ENCODE measurements at regions of chr17 and their contacts with region 1.

Region 1: DNA sequence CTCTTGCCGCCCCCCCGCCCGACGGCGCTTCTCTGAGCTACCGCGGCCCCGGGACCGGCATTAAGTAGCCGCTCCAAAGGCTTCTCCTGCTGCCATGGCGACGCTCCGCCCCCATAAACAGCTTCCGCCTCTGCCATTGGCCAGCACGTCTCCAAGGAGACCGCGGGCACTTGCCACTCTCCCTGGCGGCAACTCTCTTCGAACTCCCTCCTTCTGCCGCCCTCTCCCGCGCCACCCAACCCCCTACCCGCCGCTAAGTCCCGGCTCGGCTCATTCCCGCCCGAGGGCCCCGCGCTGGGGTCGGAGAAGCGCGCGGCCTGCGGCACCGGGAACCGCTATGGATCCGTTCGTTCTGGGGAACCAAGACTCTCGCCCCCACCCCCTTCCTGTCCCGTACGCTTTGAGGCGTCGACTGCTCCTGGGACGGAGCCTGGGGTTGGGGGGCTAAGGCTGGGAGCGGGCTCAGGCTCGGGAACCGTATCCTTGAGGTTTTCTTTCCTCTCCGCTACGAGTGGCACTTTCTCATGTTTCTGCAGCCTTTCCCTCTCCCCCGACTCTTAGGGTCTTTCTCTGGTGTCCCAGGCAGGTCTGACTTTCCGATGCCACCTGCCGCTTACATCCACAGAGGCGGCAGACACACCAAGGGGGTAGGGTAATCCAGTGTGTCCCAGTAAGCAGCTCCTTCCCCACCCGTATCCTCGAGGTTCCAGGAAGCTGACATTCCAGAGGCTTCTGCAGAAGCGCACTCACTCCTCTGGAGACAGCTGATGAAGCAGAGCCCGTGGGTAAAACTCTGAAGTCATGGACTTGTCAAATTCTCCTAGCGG is at the start of gene FOXJ1:
- DNase-seq: peak; percentile 95
- ATAC-seq: peak; percentile 55
- H3K4me3 Mint-ChIP-seq: peak within 1 kb of the TSS; percentile 82
- H3K27ac Mint-ChIP-seq: peak within 1 kb of the TSS; percentile 94
- H3K4me1 Mint-ChIP-seq: peaks cover 51% of the 10 kb centered on the region
- H3K27me3 Mint-ChIP-seq: peaks cover 5% of the 10 kb centered on the region
- total RNA-seq, gene FOXJ1: 5.4 to 5.8 TPM

Region 2: DNA sequence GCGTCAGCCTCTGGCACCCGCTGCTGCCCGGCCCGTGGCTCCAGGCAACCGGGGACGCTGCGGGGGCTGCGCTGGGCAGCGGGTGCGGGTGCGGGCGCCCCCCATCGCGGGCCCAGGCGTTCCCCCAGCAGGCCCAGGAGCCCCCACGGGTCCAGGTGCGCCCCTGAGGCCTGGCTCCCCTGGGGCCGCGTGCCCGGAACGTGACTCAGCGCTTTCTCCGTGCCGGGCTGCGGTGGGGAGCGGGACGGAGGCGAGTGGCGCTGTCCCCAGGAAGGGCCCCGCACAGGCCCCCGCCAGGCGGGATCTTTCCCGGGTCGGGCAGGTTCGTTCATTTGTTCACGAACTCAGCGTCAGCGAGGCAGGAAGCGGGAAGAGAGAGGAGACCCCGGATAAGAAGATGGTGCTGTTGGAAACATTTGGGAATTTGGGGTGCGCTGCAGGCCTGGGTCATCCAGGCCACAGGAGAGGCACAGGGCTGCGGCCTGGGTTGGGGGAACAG is 19.4 kb before region 1 on chr17:
- POLR2A ChIA-PET with region 1: interaction called, 50 read pairs
- DNase-seq: no peak
- ATAC-seq: peak; percentile 18
- H3K4me3 Mint-ChIP-seq: peak overlapping the region; percentile 64
- H3K27ac Mint-ChIP-seq: peak overlapping the region; percentile 86
- H3K4me1 Mint-ChIP-seq: peaks cover 27% of the 10 kb centered on the region
- H3K27me3 Mint-ChIP-seq: no peaks in the 10 kb centered on the region

Region 3: DNA sequence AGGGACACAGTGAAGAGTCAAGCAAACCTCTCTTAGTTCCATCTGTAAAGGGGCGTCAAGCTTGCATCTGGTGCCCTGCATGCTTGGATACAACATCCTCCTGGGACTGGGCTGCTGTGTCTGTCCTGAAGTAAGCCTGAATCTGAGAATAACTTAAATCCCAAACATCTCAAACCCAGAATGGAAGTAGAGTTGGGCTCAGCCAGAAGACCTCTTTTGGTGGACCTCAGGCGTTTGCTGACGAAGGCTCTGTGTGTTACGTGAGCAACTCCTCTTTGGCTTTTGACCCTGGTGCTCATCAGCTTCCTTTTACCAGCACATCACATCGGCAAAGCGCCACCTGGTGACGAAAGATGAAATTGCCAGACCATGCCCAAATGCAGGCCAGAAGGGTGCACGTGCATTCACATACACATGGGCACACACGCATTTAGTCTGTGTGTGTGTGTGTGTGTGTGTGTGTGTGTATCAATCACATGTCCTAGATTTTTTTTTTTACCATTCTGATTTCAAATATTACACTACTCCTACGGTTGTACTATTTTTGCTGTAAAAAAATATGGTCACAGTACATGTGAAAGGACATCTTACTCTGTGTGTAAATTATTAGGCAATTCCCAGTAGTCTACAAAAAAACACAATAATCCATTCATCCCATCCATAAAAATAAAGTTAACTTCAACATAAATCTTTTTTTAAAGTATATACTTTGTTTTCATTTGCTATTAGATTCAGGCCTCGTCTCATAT is 40.8 kb after region 1 on chr17:
- POLR2A ChIA-PET with region 1: interaction called, 39 read pairs
- DNase-seq: peak; percentile 92
- ATAC-seq: peak; percentile 69
- H3K4me3 Mint-ChIP-seq: peak overlapping the region; percentile 56
- H3K27ac Mint-ChIP-seq: peak overlapping the region; percentile 94
- H3K4me1 Mint-ChIP-seq: peaks cover 50% of the 10 kb centered on the region
- H3K27me3 Mint-ChIP-seq: no peaks in the 10 kb centered on the region

Region 4: GRCh38 chr17:76191896-76192295 is 50.5 kb after region 1 on chr17:
- POLR2A ChIA-PET with region 1: interaction called, 13 read pairs
- DNase-seq: no peak
- ATAC-seq: peak; percentile 80
- H3K4me3 Mint-ChIP-seq: peak overlapping the region; percentile 74
- H3K27ac Mint-ChIP-seq: peak overlapping the region; percentile 91
- H3K4me1 Mint-ChIP-seq: peaks cover 69% of the 10 kb centered on the region
- H3K27me3 Mint-ChIP-seq: no peaks in the 10 kb centered on the region

Region 5: DNA sequence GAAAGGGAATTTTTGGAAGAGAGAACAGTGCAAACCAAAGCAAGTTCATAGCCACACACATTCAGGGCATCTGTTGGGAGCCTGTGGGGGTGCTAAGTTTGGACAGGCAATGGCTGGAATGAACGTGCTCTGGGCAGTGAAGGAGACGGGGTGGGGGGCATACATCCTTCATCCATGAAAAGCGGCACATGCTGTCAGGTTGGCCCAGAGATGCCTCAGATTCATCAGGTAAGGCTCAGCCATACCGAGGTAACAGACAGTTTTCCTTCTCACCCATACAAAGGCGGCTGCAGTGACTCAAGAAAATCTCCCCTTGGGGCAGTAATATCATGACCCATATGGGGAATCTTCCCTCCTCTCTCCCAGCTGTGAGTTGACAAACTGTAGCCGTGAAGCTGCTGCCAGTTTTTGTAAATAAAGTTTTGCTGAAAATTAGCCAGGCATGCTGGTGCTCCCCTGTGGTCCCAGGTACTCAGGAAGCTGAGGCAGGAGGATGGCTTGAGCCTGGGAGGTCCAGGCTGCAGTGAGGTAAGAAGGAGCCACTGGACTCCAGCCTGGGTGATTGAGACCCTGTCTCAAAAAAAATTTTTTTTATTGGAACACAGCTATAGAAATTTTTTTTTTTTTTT is 114.5 kb after region 1 on chr17:
- POLR2A ChIA-PET with region 1: interaction called, 13 read pairs
- DNase-seq: peak; percentile 34
- ATAC-seq: peak; percentile 2
- H3K4me3 Mint-ChIP-seq: peak overlapping the region; percentile 83
- H3K27ac Mint-ChIP-seq: peak overlapping the region; percentile 94
- H3K4me1 Mint-ChIP-seq: peaks cover 41% of the 10 kb centered on the region
- H3K27me3 Mint-ChIP-seq: no peaks in the 10 kb centered on the region

Region 6: DNA sequence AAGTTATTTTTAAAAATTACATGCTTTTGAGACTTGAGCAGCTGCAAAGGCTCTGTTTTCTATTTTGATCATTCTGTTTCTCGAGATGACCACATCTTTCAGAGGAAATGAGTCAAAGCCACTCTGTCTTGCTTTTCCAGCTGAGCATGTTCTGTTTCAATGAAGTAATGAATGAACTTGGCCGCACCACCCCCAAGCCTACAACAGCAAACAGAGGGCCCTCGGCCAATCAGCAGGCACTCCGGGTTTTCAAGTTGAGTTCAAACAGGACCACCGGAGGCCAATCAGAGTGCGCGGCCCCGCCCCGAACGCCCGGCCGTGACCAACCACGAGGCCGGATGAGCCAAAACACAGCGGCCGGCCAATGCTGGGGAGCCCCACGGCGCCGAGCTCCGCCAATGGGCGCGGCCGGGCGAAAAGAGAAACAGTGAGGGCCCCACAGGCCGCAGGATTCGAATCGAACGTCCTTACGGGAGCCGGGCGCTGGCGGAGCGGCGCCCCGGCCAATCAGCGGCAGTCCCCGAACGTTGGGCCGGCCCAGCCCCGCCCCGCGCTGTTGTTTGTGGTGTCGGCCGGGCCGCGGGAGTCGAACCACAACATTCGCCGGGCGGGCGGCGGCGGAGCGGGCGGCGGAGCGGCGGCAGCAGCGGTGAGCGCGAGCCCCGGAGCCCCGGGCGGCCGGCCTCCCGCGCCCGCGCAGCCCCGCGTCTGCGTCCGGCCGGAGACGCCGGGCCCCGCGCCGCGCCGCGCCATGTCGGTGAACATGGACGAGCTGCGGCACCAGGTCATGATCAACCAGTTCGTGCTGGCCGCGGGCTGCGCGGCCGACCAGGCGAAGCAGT is 123.6 kb after region 1 on chr17 and contains the start of gene UBALD2:
- POLR2A ChIA-PET with region 1: interaction called, 226 read pairs
- DNase-seq: peak; percentile 99
- ATAC-seq: peak; percentile 81
- H3K4me3 Mint-ChIP-seq: peak within 1 kb of the TSS; percentile 88
- H3K27ac Mint-ChIP-seq: peak within 1 kb of the TSS; percentile 96
- H3K4me1 Mint-ChIP-seq: peaks cover 51% of the 10 kb centered on the region
- H3K27me3 Mint-ChIP-seq: no peaks in the 10 kb centered on the region
- total RNA-seq, gene UBALD2: 344 to 375 TPM